HEK293 (cell line): ENCODE measurements at regions of chr7 and their contacts with region 1.

Region 1: GRCh38 chr7:101814991-101815834 is 2.2 kb upstream of the CUX1 start:
- H3K4me3 ChIP-seq: peak overlapping the region; percentile 77
- H3K27ac ChIP-seq: peak overlapping the region; percentile 88; the same call in 1 of the 2 replicates
- H3K4me1 ChIP-seq: peaks cover 13% of the 10 kb centered on the region
- CTCF ChIP-seq: peak; percentile 53; the same call in 1 of the 2 replicates

Region 2: DNA sequence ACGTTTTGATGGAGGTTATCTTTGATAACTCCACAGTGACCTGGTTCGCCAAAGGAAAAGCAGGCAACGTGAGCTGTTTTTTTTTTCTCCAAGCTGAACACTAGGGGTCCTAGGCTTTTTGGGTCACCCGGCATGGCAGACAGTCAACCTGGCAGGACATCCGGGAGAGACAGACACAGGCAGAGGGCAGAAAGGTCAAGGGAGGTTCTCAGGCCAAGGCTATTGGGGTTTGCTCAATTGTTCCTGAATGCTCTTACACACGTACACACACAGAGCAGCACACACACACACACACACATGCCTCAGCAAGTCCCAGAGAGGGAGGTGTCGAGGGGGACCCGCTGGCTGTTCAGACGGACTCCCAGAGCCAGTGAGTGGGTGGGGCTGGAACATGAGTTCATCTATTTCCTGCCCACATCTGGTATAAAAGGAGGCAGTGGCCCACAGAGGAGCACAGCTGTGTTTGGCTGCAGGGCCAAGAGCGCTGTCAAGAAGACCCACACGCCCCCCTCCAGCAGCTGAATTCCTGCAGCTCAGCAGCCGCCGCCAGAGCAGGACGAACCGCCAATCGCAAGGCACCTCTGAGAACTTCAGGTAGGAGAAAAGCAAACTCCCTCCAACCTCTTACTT is 688.4 kb before region 1 on chr7 and contains the start of gene SERPINE1:
- CTCF ChIA-PET with region 1: no interaction called
- POLR2A ChIA-PET with region 1: interaction called, 11 read pairs
- H3K4me3 ChIP-seq: peak within 1 kb of the TSS; percentile 4; the same call in 1 of the 2 replicates
- H3K27ac ChIP-seq: no peak within 1 kb of the TSS
- H3K4me1 ChIP-seq: no peaks in the 10 kb centered on the region; the same call in 1 of the 2 replicates
- CTCF ChIP-seq: peak; percentile 39; the same call in 1 of the 2 replicates

Region 3: GRCh38 chr7:101848208-101848951 is 33.2 kb after region 1 on chr7:
- CTCF ChIA-PET with region 1: interaction called, 11 read pairs
- POLR2A ChIA-PET with region 1: no interaction called
- H3K4me3 ChIP-seq: no peak overlapping the region
- H3K27ac ChIP-seq: no peak overlapping the region
- H3K4me1 ChIP-seq: no peaks in the 10 kb centered on the region
- CTCF ChIP-seq: no peak

Region 4: DNA sequence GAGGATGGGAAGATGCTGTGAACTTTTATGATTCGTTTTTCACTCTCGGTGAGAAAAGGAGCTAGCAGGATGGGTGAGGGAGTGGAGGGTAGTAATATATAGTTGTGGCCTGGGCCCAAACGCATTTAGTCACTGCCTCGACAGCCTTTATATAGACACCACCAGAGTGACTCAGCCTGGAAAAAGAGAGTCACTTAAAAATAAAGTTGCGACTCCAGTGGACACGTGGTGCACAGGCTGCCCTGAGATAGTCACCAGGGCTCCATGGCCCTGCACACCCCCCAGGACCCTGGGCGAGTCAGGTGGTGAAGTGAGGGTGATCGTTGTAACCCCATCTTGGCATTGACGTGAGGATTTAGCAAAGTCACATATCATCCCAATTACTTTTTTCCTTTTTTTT is 109.0 kb after region 1 on chr7:
- CTCF ChIA-PET with region 1: no interaction called
- POLR2A ChIA-PET with region 1: no interaction called
- H3K4me3 ChIP-seq: no peak overlapping the region
- H3K27ac ChIP-seq: no peak overlapping the region
- H3K4me1 ChIP-seq: no peaks in the 10 kb centered on the region
- CTCF ChIP-seq: no peak